ENCODE measurements at regions of chr3 and their contacts with region 1.

Region 1: DNA sequence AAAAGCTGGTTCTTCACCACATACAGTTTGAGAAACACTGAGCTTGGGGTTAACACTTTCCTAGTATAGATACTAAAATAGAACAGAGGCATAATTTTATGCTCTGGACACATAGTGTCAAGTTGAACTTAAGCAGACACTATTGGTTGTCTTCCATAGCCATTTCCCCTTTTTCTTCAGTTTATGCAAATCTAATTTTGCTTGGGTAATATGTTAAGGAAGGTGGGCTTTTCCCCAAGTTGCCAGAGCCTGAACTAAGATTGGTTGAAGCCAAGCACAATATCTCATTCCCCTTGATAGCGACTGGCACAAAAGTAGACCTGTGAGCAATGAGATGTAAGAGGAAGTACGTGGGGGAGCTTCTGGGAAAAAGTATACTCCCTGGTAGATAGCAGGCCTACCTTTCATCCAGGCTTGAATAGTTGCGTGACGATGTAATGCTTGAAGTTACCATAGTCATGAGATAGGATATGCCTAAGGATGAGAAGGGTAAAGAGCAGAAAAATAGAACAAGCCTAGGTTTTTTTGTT is 4.5 kb upstream of the POPDC2 start:
- DNase-seq: peak in 1 of 2 experiments; percentile 21
- ATAC-seq: peak in 1 of 2 experiments; percentile 30; a peak in 1 of 6 replicates
- H3K4me3 ChIP-seq: no peak overlapping the region
- H3K27ac ChIP-seq: no peak overlapping the region
- H3K4me1 ChIP-seq: peaks cover 9% of the 10 kb centered on the region
- CTCF ChIP-seq: no peak
- EP300 ChIP-seq: no peak
- POLR2A ChIP-seq: no peak
- RAD21 ChIP-seq: no peak

Region 2: DNA sequence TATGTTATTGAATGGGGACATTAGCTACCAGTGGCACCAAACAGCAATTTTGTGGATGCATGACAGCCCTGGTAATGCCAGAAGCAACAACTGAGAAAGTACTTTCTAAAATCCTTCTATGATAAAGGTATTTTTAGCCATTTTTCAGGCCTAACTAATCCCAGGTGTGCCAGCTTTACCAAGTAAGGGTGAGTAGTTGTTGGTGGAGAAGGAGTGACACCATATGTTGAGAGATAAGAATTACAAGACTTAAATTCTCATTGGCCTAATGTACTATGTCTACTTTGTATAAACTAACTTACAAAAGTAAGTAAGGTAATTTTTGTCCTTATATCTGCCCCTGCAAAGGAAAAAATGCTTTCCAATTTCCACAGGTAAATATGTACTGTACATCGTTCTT is 16.4 kb after region 1 on chr3:
- CTCF ChIA-PET with region 1: interaction called, 10 read pairs
- POLR2A ChIA-PET with region 1: interaction called, 3 read pairs
- DNase-seq: peak; percentile 27 to 44
- ATAC-seq: peak; percentile 47 to 54; a peak in 2 of 6 replicates
- H3K4me3 ChIP-seq: no peak overlapping the region
- H3K27ac ChIP-seq: no peak overlapping the region
- H3K4me1 ChIP-seq: peaks cover 5% of the 10 kb centered on the region; the same call in 2 of the 3 replicates
- CTCF ChIP-seq: peak; percentile 70
- EP300 ChIP-seq: no peak
- POLR2A ChIP-seq: no peak
- RAD21 ChIP-seq: peak; percentile 84 to 87